Activated CD4-positive, alpha-beta memory T cell treated with anti-CD3 and anti-CD28 coated beads, Interleukin-2, amount 10 ng/mL, durations not matched to agents 7 days and 5 days (primary cell): ENCODE measurements at regions of chr19 and their contacts with region 1.

Region 1: DNA sequence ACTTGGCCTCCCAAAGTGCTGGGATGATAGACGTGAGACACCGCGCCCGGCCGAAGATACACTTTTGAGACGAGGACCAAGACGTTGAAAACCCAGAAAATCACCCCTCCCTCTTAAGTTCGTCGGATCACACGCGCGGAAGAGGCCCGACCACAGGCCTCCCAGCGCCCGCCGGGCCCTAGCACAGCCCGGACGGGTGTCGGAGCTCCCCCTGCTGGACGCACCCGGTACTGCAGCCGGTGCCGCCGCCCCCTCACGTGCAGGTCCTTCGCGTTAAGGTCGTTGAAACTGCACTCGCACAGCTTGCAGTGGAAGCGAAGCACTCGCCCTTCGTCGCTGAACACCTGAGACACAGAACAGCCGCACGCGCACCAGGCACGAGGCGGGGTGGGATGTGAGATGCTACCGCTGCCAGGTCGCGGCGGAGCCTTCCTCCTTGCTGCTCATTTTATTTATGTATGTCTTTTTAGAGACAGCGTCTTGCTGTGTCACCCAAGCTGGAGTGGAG is 35.7 kb upstream of the MATK start:
- DNase-seq: peak; percentile 91
- H3K4me3 Mint-ChIP-seq: no peak overlapping the region
- H3K27ac Mint-ChIP-seq: peak overlapping the region; percentile 56
- H3K4me1 Mint-ChIP-seq: peaks cover 19% of the 10 kb centered on the region
- H3K27me3 Mint-ChIP-seq: peaks cover 1% of the 10 kb centered on the region

Region 2: DNA sequence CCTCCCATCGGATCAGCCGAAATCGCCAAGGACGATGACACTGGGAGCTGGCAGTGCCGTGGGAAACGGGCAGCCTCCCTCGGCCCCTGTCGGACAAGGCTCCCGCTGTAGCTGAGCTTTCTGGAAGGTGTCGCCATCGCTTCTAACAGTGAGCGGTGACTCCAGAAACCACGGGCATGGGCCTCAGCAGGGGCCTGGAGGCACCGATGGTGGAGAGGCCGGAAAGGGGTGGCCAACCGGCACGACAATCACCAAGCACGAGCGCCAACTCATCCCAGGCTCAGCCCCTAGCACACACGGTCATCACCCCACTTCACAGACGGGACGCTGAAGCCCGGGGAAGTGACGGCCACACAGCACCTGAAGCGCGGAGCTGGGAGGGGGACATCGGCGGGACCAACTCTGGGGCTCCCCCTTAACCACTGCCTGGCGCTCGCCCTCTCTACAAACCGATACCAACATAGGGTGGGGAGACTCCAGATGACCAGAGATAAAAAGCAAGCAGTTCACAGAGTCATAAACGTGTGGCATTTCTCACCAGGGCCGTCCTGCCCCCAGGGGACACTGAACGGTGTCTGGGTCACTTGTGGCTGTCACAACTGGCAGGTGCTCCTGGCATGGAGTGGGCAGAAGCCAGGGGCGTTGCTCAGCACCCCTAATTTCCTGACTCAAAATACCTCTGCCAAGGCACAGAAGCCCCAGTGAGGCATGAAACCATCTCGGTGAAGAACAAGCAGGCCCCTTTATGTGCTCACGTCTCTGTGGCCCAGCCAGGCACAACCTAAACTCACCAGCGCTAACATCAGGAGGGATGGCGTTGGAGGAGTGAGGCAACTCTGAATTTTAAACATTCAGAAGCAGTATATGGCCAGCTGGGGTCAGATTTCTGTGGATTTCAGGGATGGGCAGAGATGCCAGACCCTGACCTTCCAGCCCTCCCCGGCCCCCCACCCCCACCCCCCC is 123.6 kb before region 1 on chr19:
- CTCF ChIA-PET with region 1: no interaction called
- POLR2A ChIA-PET with region 1: no interaction called
- DNase-seq: no peak
- H3K4me3 Mint-ChIP-seq: peak overlapping the region; percentile 57
- H3K27ac Mint-ChIP-seq: no peak overlapping the region
- H3K4me1 Mint-ChIP-seq: peaks cover 16% of the 10 kb centered on the region
- H3K27me3 Mint-ChIP-seq: no peaks in the 10 kb centered on the region

Region 3: GRCh38 chr19:3708208-3708931 is 113.5 kb before region 1 on chr19 and contains the start of gene TJP3:
- CTCF ChIA-PET with region 1: interaction called, 11 read pairs
- POLR2A ChIA-PET with region 1: no interaction called
- DNase-seq: no peak
- H3K4me3 Mint-ChIP-seq: no peak within 1 kb of the TSS
- H3K27ac Mint-ChIP-seq: no peak within 1 kb of the TSS
- H3K4me1 Mint-ChIP-seq: peaks cover 5% of the 10 kb centered on the region
- H3K27me3 Mint-ChIP-seq: peaks cover 7% of the 10 kb centered on the region
- total RNA-seq, gene TJP3: 1.4 to 1.7 TPM

Region 4: GRCh38 chr19:3762501-3763459 is 59.1 kb before region 1 on chr19 and contains the start of gene MRPL54:
- CTCF ChIA-PET with region 1: interaction called, 35 read pairs
- POLR2A ChIA-PET with region 1: interaction called, 21 read pairs
- DNase-seq: peak; percentile 100
- H3K4me3 Mint-ChIP-seq: peak within 1 kb of the TSS; percentile 90
- H3K27ac Mint-ChIP-seq: peak within 1 kb of the TSS; percentile 98
- H3K4me1 Mint-ChIP-seq: peaks cover 45% of the 10 kb centered on the region
- H3K27me3 Mint-ChIP-seq: no peaks in the 10 kb centered on the region
- total RNA-seq, gene MRPL54: 71.5 to 75.8 TPM

Region 5: GRCh38 chr19:3798137-3798536 is 23.8 kb before region 1 on chr19:
- CTCF ChIA-PET with region 1: interaction called, 15 read pairs
- POLR2A ChIA-PET with region 1: no interaction called
- DNase-seq: peak; percentile 66
- H3K4me3 Mint-ChIP-seq: peak overlapping the region; percentile 28
- H3K27ac Mint-ChIP-seq: peak overlapping the region; percentile 68
- H3K4me1 Mint-ChIP-seq: peaks cover 21% of the 10 kb centered on the region
- H3K27me3 Mint-ChIP-seq: peaks cover 6% of the 10 kb centered on the region

Region 6: GRCh38 chr19:3809881-3810707 is 11.8 kb before region 1 on chr19:
- CTCF ChIA-PET with region 1: interaction called, 25 read pairs
- POLR2A ChIA-PET with region 1: interaction called, 15 read pairs
- DNase-seq: no peak
- H3K4me3 Mint-ChIP-seq: no peak overlapping the region
- H3K27ac Mint-ChIP-seq: no peak overlapping the region
- H3K4me1 Mint-ChIP-seq: peaks cover 48% of the 10 kb centered on the region
- H3K27me3 Mint-ChIP-seq: no peaks in the 10 kb centered on the region